Gastrocnemius medialis (tissue), 4 donors: ENCODE measurements at regions of chr12 and their contacts with region 1.

Region 1: DNA sequence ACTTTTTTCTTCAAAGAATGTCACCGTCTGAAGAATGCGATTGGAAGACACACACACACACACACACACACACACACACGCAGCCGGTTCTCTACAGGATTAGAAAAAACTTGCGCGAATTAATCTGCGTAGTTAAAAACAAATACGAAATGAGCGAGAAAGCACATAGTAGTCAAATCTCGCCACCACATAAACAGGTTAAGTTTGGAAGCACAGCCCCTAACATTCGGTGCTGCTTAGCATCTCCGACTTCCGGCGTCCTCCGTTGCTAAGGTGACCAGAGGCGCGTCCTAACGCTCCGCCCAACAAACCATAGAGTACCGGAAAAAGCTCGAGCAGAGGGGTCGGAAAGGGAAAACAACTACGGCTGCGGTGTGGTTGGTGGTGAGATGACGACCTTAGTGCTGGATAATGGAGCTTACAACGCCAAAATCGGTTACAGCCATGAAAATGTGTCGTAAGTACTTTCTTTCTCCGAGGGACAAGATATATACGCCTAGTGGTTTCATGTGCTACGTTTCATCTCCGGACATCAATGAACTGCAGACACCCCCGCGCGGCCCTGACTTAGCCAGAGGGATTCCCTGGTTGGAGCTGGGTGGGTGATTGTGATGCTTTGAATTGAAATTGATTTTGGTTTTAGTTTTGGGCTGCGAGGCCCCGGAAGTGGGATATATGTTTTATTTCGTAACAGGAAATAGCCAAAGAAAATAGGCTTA is at the start of gene ACTR6:
- DNase-seq: peak; percentile 91
- ATAC-seq: peak; percentile 99 to 100
- H3K4me3 ChIP-seq: peak within 1 kb of the TSS; percentile 75 to 82 (median 82)
- H3K27ac ChIP-seq: peak within 1 kb of the TSS; percentile 75 to 83 (median 81)
- H3K4me1 ChIP-seq: peaks cover 6 to 15% of the 10 kb centered on the region in 2 donors
- H3K27me3 ChIP-seq: no peaks in the 10 kb centered on the region
- CTCF ChIP-seq: no peak
- POLR2A ChIP-seq: peak in 1 of 2 donors; percentile 15
- total RNA-seq, gene ACTR6: 8.4 to 19.2 (median 16.6) TPM

Region 2: GRCh38 chr12:99810718-99811593 is 389.7 kb before region 1 on chr12:
- in situ Hi-C with region 1: loop called in 1 of 4 experiments (anchors 25 kb)
- intact Hi-C with region 1: no loop called
- DNase-seq: no peak
- ATAC-seq: no peak
- H3K4me3 ChIP-seq: no peak overlapping the region
- H3K27ac ChIP-seq: no peak overlapping the region
- H3K4me1 ChIP-seq: no peaks in the 10 kb centered on the region
- H3K27me3 ChIP-seq: no peaks in the 10 kb centered on the region
- CTCF ChIP-seq: peak in 2 of 5 experiments; percentile 23 to 38
- POLR2A ChIP-seq: no peak

Region 3: DNA sequence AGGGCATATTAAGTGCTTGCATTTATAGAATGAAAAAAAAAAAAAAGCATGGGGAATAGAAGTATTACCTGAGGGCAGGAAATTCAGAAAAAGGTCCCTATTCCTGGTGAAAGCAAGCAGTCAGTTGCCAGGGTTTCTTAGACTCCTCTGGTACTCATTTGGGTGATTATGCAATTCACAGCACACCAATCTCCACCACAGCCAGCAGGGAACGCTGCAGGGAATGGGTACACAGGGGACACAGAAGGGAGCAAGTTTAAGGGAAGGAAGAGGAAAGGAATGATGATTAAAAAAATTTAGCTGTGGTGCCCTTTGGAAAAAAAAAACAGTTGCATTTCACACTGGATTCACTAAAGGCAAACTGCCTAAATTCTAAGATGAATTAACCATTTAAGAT is 72.1 kb before region 1 on chr12:
- in situ Hi-C with region 1: no loop called
- intact Hi-C with region 1: loop called (anchors 5 kb)
- DNase-seq: peak in 1 of 2 donors; percentile 54
- ATAC-seq: peak; percentile 87 to 94
- H3K4me3 ChIP-seq: no peak overlapping the region
- H3K27ac ChIP-seq: peak overlapping the region; percentile 34 to 61 (median 48)
- H3K4me1 ChIP-seq: peaks cover 12 to 28% of the 10 kb centered on the region in 2 donors
- H3K27me3 ChIP-seq: no peaks in the 10 kb centered on the region
- CTCF ChIP-seq: peak in 3 of 5 experiments; percentile 13 to 48 (median 23)
- POLR2A ChIP-seq: no peak

Region 4: DNA sequence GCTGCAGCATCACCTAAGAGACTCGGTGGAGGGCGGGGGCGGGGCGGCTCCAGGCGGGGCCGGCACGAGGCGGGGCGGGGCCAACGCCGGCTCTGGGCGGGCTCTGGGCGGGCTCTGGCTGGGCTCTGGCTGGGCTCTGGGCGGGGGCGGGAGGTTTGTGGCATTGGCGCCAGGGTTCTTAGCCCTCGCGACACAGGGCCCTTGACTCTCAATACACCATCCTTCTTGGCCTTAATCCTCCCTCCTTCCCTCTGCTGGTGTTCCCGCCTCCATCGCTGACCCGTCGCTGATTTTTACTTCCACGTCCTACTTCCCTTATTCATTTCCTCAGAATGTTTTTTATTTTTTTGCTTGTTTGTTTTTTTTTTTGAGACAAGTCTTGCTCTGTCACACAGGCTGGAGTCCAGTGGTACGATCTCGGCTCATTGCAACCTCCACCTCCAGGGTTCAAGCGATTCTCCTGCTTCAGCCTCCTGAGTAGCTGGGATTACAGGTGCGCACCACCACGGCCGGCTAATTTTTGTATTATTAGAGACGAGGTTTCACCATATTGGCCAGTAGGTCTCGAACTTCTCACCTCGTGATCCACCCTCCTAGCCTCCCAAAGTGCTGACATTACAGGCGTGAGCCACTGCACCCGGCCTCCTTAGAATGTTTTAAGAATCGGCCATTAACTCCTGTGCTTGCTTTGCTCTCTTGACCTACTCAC is 57.6 kb before region 1 on chr12 and contains the start of gene BLTP3B:
- in situ Hi-C with region 1: loop called in 1 of 4 experiments (anchors 5 kb)
- intact Hi-C with region 1: loop called (anchors 1 kb)
- DNase-seq: peak; percentile 84 to 88
- ATAC-seq: peak; percentile 77 to 80
- H3K4me3 ChIP-seq: peak within 1 kb of the TSS; percentile 95 to 97 (median 96)
- H3K27ac ChIP-seq: peak within 1 kb of the TSS; percentile 96 to 98 (median 98)
- H3K4me1 ChIP-seq: peaks cover 12 to 31% of the 10 kb centered on the region in 2 donors
- H3K27me3 ChIP-seq: no peaks in the 10 kb centered on the region
- CTCF ChIP-seq: no peak
- POLR2A ChIP-seq: no peak
- total RNA-seq, gene BLTP3B: 33.6 to 71.3 (median 42.5) TPM

Region 5: DNA sequence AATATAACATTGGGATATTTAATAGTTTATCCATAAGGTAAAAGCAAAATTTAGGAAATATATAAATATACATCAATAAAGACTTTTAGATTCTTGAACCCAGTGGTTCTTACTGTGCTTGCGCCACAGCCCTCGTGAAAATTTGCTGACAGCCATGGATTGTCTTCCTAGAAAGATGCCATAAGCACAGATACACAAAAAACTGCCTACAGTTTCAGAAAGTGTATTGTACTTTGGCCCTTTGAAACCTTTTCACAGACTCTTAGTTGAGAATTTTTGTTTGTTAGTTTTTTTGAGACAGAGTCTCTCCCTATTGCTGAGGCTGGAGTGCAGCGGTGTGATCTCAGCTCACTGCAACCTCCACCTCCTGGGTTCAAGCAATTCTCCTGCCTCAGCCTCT is 38.2 kb after region 1 on chr12:
- in situ Hi-C with region 1: no loop called
- intact Hi-C with region 1: no loop called
- DNase-seq: no peak
- ATAC-seq: no peak
- H3K4me3 ChIP-seq: no peak overlapping the region
- H3K27ac ChIP-seq: no peak overlapping the region
- H3K4me1 ChIP-seq: no peaks in the 10 kb centered on the region
- H3K27me3 ChIP-seq: no peaks in the 10 kb centered on the region
- CTCF ChIP-seq: no peak
- POLR2A ChIP-seq: no peak

Region 6: GRCh38 chr12:100266835-100267618 is 66.4 kb after region 1 on chr12 and contains the starts of genes DEPDC4 and SCYL2:
- in situ Hi-C with region 1: no loop called
- intact Hi-C with region 1: loop called (anchors 2 kb)
- DNase-seq: peak; percentile 93 to 95
- ATAC-seq: peak; percentile 94
- H3K4me3 ChIP-seq: peak within 1 kb of the TSS; percentile 84 to 98 (median 86)
- H3K27ac ChIP-seq: peak within 1 kb of the TSS; percentile 91 to 96 (median 95)
- H3K4me1 ChIP-seq: peaks cover 24% of the 10 kb centered on the region in 2 donors
- H3K27me3 ChIP-seq: no peaks in the 10 kb centered on the region
- CTCF ChIP-seq: peak in 1 of 5 experiments; percentile 28
- POLR2A ChIP-seq: peak; percentile 61 to 76
- total RNA-seq, gene DEPDC4: not detected
- total RNA-seq, gene SCYL2: 28.9 to 44.9 (median 33.3) TPM